Heart left ventricle (tissue), 16 donors: ENCODE measurements at regions of chrX and their contacts with region 1.

Region 1: DNA sequence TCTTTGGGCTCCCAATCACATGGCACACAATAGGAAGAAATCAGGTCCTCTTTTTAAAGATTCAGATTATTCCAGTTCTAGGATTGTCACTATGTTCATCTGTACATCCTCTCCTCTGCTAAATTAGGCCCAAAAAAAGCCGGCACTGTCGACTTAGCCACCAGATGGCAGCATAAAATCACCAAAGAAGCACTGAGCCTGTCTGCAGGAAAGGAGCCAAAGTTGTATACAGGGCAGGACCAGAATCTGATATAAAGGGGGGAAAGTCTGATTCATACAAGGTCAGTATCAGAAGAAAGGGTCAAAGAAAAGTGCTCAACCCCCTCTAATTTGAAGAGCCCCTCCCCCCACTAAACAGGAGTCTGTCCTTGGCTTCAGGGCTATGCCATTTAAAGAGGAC is 292.5 kb downstream of the CHIC1 start:
- DNase-seq: peak; percentile 34 to 57 (median 51)
- ATAC-seq: peak in 3 of 4 donors; percentile 20 to 69 (median 30)
- H3K4me3 ChIP-seq: no peak overlapping the region
- H3K27ac ChIP-seq: no peak overlapping the region
- H3K4me1 ChIP-seq: no peaks in the 10 kb centered on the region
- H3K27me3 ChIP-seq: no peaks in the 10 kb centered on the region
- CTCF ChIP-seq: peak; percentile 47 to 82 (median 65)
- POLR2A ChIP-seq: no peak

Region 2: GRCh38 chrX:73785493-73785892 is 70.1 kb before region 1 on chrX:
- intact Hi-C with region 1: no loop called
- DNase-seq: no peak
- ATAC-seq: no peak
- H3K4me3 ChIP-seq: no peak overlapping the region
- H3K27ac ChIP-seq: no peak overlapping the region
- H3K4me1 ChIP-seq: no peaks in the 10 kb centered on the region
- H3K27me3 ChIP-seq: no peaks in the 10 kb centered on the region
- CTCF ChIP-seq: no peak
- POLR2A ChIP-seq: no peak

Region 3: GRCh38 chrX:74009041-74009440 is 153.5 kb after region 1 on chrX:
- intact Hi-C with region 1: loop called in 2 of 10 experiments (anchors 2 kb)
- DNase-seq: no peak
- ATAC-seq: no peak
- H3K4me3 ChIP-seq: no peak overlapping the region
- H3K27ac ChIP-seq: no peak overlapping the region
- H3K4me1 ChIP-seq: no peaks in the 10 kb centered on the region
- H3K27me3 ChIP-seq: no peaks in the 10 kb centered on the region
- CTCF ChIP-seq: no peak
- POLR2A ChIP-seq: no peak

Region 4: DNA sequence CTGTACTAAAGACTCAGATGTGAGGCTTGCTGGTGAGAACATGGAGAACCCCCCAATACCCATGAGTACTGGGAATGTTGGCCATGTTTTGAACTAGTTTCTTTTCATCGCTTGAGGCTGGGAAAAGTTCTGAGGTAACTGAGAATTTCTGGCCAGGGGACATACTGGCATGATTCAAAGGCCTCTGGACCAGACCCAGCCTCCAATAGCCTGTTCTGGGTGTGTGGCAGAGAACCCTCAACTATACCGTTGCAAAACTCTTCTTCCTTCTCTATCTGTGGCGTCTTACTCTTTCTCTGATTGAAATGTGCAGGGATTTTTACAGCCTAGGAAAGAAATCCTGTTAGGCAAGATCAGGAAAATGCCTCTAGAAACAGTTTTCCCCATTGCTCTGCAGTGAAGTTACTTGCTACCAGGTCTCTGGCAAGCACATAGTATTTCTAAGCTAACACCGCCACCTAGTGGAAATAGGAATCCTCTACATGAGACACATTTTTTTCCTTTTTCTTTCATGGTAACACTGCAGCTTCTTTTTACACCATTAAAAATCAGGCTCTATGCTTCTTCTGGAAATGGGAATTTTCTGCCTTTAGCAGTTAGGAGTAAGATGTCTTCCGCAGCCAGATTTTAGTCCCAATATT is 277.7 kb after region 1 on chrX:
- intact Hi-C with region 1: loop called (anchors 1 to 10 kb)
- DNase-seq: no peak
- ATAC-seq: peak in 3 of 4 donors; percentile 53 to 78 (median 74)
- H3K4me3 ChIP-seq: no peak overlapping the region
- H3K27ac ChIP-seq: peak overlapping the region in 1 of 12 donors; percentile 26
- H3K4me1 ChIP-seq: no peaks in the 10 kb centered on the region
- H3K27me3 ChIP-seq: peaks cover 0 to 2% (median 0%) of the 10 kb centered on the region in 9 donors
- CTCF ChIP-seq: peak; percentile 48 to 85 (median 66)
- POLR2A ChIP-seq: no peak

Region 5: GRCh38 chrX:74349387-74349786 is 493.8 kb after region 1 on chrX:
- intact Hi-C with region 1: loop called in 8 of 10 experiments (anchors 2 to 5 kb)
- DNase-seq: no peak
- ATAC-seq: no peak
- H3K4me3 ChIP-seq: no peak overlapping the region
- H3K27ac ChIP-seq: no peak overlapping the region
- H3K4me1 ChIP-seq: no peaks in the 10 kb centered on the region
- H3K27me3 ChIP-seq: peaks cover 0 to 6% (median 0%) of the 10 kb centered on the region in 9 donors
- CTCF ChIP-seq: no peak
- POLR2A ChIP-seq: no peak

Region 6: GRCh38 chrX:74550295-74550802 is 694.8 kb after region 1 on chrX:
- intact Hi-C with region 1: loop called in 6 of 10 experiments (anchors 5 to 10 kb)
- DNase-seq: peak; percentile 78 to 88 (median 81)
- ATAC-seq: peak; percentile 71 to 95 (median 90)
- H3K4me3 ChIP-seq: peak overlapping the region in 3 of 12 donors; percentile 8 to 32 (median 25)
- H3K27ac ChIP-seq: peak overlapping the region in 1 of 12 donors; percentile 15
- H3K4me1 ChIP-seq: no peaks in the 10 kb centered on the region
- H3K27me3 ChIP-seq: peaks cover 0 to 10% (median 0%) of the 10 kb centered on the region in 9 donors
- CTCF ChIP-seq: peak; percentile 88 to 99 (median 95)
- POLR2A ChIP-seq: no peak